ENCODE measurements at regions of chr2 and their contacts with region 1.

Region 1: GRCh38 chr2:161426922-161427663 is 11.0 kb downstream of the TBR1 start:
- DNase-seq: peak in 1 of 2 donors; percentile 20
- H3K4me3 ChIP-seq: no peak overlapping the region
- H3K27ac ChIP-seq: no peak overlapping the region
- H3K4me1 ChIP-seq: peaks cover 4 to 18% of the 10 kb centered on the region in 2 donors
- H3K27me3 ChIP-seq: peaks cover 62% of the 10 kb centered on the region
- CTCF ChIP-seq: no peak
- POLR2A ChIP-seq: no peak

Region 2: DNA sequence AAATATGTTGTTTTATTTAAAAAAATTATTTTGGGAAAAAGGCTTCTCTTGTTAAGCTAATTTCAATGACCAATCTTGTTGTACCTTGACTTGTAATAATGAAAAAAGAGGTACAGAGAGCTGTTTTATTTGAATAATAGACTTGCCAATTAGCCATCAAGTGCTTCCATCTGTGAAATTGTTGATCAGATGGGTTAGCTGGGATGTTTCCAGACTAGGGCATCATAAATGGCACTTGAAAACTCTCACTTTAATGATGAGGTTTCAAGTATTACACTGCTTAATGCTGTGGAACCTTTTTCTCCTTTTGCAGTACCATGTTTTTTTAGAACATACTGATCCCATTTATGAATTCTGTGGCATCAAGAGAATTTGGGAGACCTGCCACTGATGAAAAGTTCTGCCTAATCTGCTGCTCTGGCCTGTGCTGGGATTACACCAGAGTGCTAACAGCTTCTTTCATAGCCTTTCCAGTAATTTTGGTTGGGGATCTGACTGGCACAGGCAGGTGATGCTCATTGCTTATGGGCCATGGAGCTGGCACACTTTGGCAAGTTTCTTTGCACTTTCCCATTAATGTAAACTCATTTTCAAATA is 94.6 kb before region 1 on chr2:
- intact Hi-C with region 1: loop called (anchors 10 kb)
- DNase-seq: no peak
- H3K4me3 ChIP-seq: no peak overlapping the region
- H3K27ac ChIP-seq: no peak overlapping the region
- H3K4me1 ChIP-seq: no peaks in the 10 kb centered on the region
- H3K27me3 ChIP-seq: no peaks in the 10 kb centered on the region
- CTCF ChIP-seq: no peak
- POLR2A ChIP-seq: no peak

Region 3: GRCh38 chr2:161384864-161385263 is 42.2 kb before region 1 on chr2:
- intact Hi-C with region 1: no loop called
- DNase-seq: no peak
- H3K4me3 ChIP-seq: no peak overlapping the region
- H3K27ac ChIP-seq: no peak overlapping the region
- H3K4me1 ChIP-seq: no peaks in the 10 kb centered on the region
- H3K27me3 ChIP-seq: no peaks in the 10 kb centered on the region
- CTCF ChIP-seq: no peak
- POLR2A ChIP-seq: no peak

Region 4: GRCh38 chr2:161480123-161480522 is 53.0 kb after region 1 on chr2:
- intact Hi-C with region 1: no loop called
- DNase-seq: no peak
- H3K4me3 ChIP-seq: no peak overlapping the region
- H3K27ac ChIP-seq: no peak overlapping the region
- H3K4me1 ChIP-seq: no peaks in the 10 kb centered on the region
- H3K27me3 ChIP-seq: no peaks in the 10 kb centered on the region
- CTCF ChIP-seq: no peak
- POLR2A ChIP-seq: no peak

Region 5: GRCh38 chr2:161604901-161605300 is 177.8 kb after region 1 on chr2:
- intact Hi-C with region 1: no loop called
- DNase-seq: no peak
- H3K4me3 ChIP-seq: no peak overlapping the region
- H3K27ac ChIP-seq: no peak overlapping the region
- H3K4me1 ChIP-seq: no peaks in the 10 kb centered on the region
- H3K27me3 ChIP-seq: no peaks in the 10 kb centered on the region
- CTCF ChIP-seq: no peak
- POLR2A ChIP-seq: no peak

Measured in thyroid gland (tissue), 4 donors.